ENCODE measurements at regions of chr2 and their contacts with region 1.

Region 1: DNA sequence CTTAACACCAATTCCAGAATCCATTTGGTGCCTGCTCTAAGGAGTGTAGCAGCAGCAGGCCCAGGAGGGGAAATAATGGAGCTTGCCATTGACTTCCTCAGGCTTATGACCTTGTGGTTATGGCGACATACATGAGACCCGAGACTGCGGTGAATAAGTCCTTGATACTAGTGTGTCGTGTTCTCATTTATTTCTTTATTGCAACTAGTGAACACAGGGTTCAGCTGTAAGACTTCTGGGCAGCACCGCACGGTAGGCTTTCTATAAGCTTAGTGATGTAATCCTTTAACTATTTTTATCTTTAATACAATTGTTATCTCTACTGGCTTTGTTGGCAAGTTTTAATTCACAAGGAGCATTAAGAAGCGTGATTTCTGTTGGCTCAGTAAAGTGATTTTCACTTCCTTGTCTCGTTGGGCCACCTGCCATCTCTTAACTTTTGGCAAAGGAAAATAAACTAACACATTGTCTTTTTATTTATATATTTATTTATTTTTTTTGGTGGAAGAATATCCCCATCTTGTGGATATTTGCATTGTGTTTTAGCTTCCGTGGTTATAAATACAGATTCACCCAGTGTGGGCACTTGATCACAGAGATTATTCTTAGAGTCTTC is 139.8 kb downstream of the LTBP1 start:
- DNase-seq: peak; percentile 83
- H3K4me3 ChIP-seq: no peak overlapping the region
- H3K27ac ChIP-seq: peak overlapping the region; percentile 83
- H3K4me1 ChIP-seq: peaks cover 21% of the 10 kb centered on the region
- H3K27me3 ChIP-seq: no peaks in the 10 kb centered on the region
- CTCF ChIP-seq: no peak
- POLR2A ChIP-seq: no peak

Region 2: DNA sequence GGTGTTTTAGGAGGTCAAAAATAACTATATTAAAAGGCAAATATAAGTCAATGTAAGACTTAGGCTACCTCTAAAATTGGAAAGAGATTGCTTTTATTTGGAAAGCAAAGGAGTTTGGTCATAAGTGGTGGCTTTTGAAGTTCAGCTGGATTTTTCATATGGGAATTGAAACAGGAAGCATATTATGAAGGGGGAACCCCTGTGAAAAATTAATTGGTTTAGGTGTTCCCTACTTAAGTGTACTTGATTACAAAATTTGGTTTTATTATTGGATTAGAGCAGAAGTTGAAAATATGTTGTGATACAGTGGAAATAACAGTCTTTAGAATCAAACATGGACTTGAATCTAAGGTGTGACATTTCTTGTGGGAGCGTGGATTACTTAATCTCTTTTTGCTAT is 580.1 kb before region 1 on chr2:
- CTCF ChIA-PET with region 1: no interaction called
- POLR2A ChIA-PET with region 1: no interaction called
- dilution Hi-C with region 1: no loop called
- intact Hi-C with region 1: no loop called
- DNase-seq: no peak
- H3K4me3 ChIP-seq: no peak overlapping the region
- H3K27ac ChIP-seq: no peak overlapping the region
- H3K4me1 ChIP-seq: no peaks in the 10 kb centered on the region
- H3K27me3 ChIP-seq: no peaks in the 10 kb centered on the region
- CTCF ChIP-seq: no peak
- POLR2A ChIP-seq: no peak

Region 3: GRCh38 chr2:32772638-32773447 is 313.7 kb before region 1 on chr2:
- CTCF ChIA-PET with region 1: interaction called, 23 read pairs
- POLR2A ChIA-PET with region 1: no interaction called
- dilution Hi-C with region 1: no loop called
- intact Hi-C with region 1: loop called (anchors 1 kb)
- DNase-seq: peak; percentile 75
- H3K4me3 ChIP-seq: no peak overlapping the region
- H3K27ac ChIP-seq: no peak overlapping the region
- H3K4me1 ChIP-seq: peaks cover 3% of the 10 kb centered on the region
- H3K27me3 ChIP-seq: no peaks in the 10 kb centered on the region
- CTCF ChIP-seq: peak; percentile 38 to 53
- POLR2A ChIP-seq: no peak

Region 4: DNA sequence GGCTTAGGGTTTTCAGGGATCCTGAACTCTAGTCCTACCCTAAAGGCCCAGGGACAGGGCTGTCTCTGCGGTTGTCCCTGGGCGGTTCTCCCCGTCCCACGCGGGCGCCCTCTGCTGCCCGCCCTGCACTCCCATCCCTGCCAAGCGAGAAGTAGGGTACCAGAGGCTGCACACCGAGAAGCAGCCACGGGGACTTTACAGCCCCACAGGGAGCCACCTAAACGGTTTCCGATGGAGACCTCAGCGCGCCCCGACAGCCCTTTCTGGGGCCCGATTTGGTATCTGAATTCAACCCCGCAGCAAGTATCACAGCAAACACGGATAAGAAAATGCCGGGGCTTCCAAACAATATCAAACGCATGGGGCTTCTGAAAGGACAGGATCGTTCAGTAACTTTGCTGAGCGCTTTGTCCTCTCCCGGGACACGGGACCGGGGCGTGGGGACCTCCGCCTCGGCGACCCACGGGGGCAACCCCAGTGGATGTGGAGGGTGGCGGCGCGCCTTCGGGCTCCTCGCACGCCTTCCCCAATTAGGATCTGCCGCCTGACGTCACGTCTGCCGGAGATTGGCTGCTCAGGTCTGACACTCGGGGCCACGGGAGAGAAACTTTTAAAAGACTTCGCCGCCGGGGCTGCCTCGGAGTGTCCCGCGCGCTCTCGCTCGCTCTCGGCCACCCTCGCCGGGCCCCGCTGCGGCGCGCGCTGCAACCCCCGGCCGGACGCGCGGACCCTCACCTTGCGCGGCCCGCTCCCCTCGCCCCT is 140.0 kb before region 1 on chr2 and contains the start of gene LTBP1:
- CTCF ChIA-PET with region 1: interaction called, 13 read pairs
- POLR2A ChIA-PET with region 1: interaction called, 3 read pairs
- dilution Hi-C with region 1: no loop called
- intact Hi-C with region 1: loop called (anchors 1 kb)
- DNase-seq: peak; percentile 77
- H3K4me3 ChIP-seq: peak within 1 kb of the TSS; percentile 50 to 86 (median 55)
- H3K27ac ChIP-seq: peak within 1 kb of the TSS; percentile 58
- H3K4me1 ChIP-seq: peaks cover 10% of the 10 kb centered on the region
- H3K27me3 ChIP-seq: no peaks in the 10 kb centered on the region
- CTCF ChIP-seq: peak; percentile 88 to 90
- POLR2A ChIP-seq: peak; percentile 14
- total RNA-seq, gene LTBP1: 68.2 and 107 TPM in 2 replicates

Region 5: DNA sequence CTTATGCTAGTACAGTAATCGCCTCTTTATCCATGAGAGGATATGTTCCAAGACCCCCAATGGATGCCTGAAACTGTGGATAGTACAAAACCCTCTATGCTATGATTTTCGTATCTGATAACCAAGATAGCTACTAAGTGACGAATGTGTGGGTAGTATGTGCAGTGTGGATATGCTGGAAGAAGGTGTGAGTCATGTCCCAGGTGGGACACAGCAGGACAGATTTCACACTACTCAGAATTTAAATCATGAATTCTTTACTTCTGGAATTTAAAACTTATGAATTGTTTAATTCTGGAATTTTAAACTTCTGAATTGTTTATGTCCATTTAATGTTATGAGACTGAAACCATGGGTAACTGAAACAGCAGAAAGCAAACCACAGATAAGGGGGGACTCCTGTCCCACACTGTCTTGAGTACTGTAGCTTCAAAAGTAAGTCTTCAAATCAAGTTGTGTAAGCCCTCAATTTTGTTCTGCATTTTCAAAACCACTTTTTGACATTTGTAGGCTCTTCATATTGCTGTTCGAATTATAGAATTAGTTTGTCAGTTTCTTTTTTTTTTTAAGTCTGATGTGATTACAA is 23.8 kb before region 1 on chr2:
- CTCF ChIA-PET with region 1: interaction called, 12 read pairs
- POLR2A ChIA-PET with region 1: no interaction called
- dilution Hi-C with region 1: no loop called
- intact Hi-C with region 1: no loop called
- DNase-seq: no peak
- H3K4me3 ChIP-seq: no peak overlapping the region
- H3K27ac ChIP-seq: no peak overlapping the region
- H3K4me1 ChIP-seq: peaks cover 19% of the 10 kb centered on the region
- H3K27me3 ChIP-seq: no peaks in the 10 kb centered on the region
- CTCF ChIP-seq: no peak
- POLR2A ChIP-seq: no peak

Region 6: GRCh38 chr2:33267756-33268155 is 181.2 kb after region 1 on chr2:
- CTCF ChIA-PET with region 1: interaction called, 7 read pairs
- POLR2A ChIA-PET with region 1: no interaction called
- dilution Hi-C with region 1: no loop called
- intact Hi-C with region 1: loop called (anchors 5 kb)
- DNase-seq: peak; percentile 79
- H3K4me3 ChIP-seq: no peak overlapping the region
- H3K27ac ChIP-seq: no peak overlapping the region
- H3K4me1 ChIP-seq: peaks cover 6% of the 10 kb centered on the region
- H3K27me3 ChIP-seq: no peaks in the 10 kb centered on the region
- CTCF ChIP-seq: no peak
- POLR2A ChIP-seq: no peak

Region 7: DNA sequence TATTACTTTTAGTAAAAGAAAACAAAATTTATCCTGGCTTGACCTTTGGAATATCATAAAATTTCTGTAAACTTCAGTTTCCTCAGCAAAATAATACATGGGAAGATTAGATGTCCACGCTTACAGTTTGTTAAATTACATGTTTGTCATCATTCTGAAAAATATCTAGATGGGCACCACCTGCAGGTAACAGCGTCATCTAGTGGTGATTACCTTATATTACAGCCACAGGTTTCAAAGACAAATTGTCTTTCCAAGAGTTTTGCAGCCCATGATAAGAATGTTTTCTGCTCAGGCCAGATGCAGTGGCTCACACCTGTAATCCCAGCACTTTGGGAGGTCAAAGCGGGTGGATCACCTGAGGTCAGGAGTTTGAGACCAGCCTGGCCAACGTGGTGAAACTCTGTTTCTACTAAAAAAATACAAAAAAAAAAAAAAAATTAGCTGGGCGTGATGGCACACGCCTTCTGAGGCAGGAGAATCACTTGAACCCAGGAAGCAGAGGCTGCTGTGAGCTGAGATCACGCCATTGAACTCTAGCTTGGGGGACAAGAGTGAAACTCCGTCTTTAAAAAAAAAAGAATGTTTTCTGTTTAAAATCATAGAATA is 293.6 kb after region 1 on chr2:
- CTCF ChIA-PET with region 1: interaction called, 10 read pairs
- POLR2A ChIA-PET with region 1: no interaction called
- dilution Hi-C with region 1: no loop called
- intact Hi-C with region 1: no loop called
- DNase-seq: no peak
- H3K4me3 ChIP-seq: no peak overlapping the region
- H3K27ac ChIP-seq: no peak overlapping the region
- H3K4me1 ChIP-seq: peaks cover 3% of the 10 kb centered on the region
- H3K27me3 ChIP-seq: no peaks in the 10 kb centered on the region
- CTCF ChIP-seq: peak; percentile 44 to 58
- POLR2A ChIP-seq: no peak

Measured in endothelial cell of umbilical vein (primary cell).